Activated B cell treated with CpG ODN at 0.5 μM for 24 hours (primary cell): ENCODE measurements at regions of chr2 and their contacts with region 1.

Region 1: GRCh38 chr2:136135921-136136906 is 18.3 kb upstream of the CXCR4 start:
- DNase-seq: peak; percentile 52
- ATAC-seq: peak; percentile 48
- H3K4me3 Mint-ChIP-seq: peak overlapping the region; percentile 62
- H3K27ac Mint-ChIP-seq: peak overlapping the region; percentile 99
- H3K4me1 Mint-ChIP-seq: peaks cover 99% of the 10 kb centered on the region
- H3K27me3 Mint-ChIP-seq: no peaks in the 10 kb centered on the region
- CTCF ChIP-seq: no peak

Region 2: GRCh38 chr2:135741395-135742324 is 394.6 kb before region 1 on chr2 and contains the start of gene UBXN4:
- CTCF ChIA-PET with region 1: no interaction called
- POLR2A ChIA-PET with region 1: no interaction called
- intact Hi-C with region 1: loop called (anchors 10 kb)
- DNase-seq: peak; percentile 81
- ATAC-seq: peak; percentile 87
- H3K4me3 Mint-ChIP-seq: peak within 1 kb of the TSS; percentile 99
- H3K27ac Mint-ChIP-seq: peak within 1 kb of the TSS; percentile 99
- H3K4me1 Mint-ChIP-seq: peaks cover 40% of the 10 kb centered on the region
- H3K27me3 Mint-ChIP-seq: no peaks in the 10 kb centered on the region
- CTCF ChIP-seq: no peak
- total RNA-seq, gene UBXN4: 87.8 and 107 TPM in 2 replicates

Region 3: GRCh38 chr2:136008205-136008865 is 127.9 kb before region 1 on chr2:
- CTCF ChIA-PET with region 1: no interaction called
- POLR2A ChIA-PET with region 1: interaction called, 5 read pairs
- intact Hi-C with region 1: loop called (anchors 1 kb)
- DNase-seq: peak; percentile 46
- ATAC-seq: peak; percentile 93
- H3K4me3 Mint-ChIP-seq: peak overlapping the region; percentile 52
- H3K27ac Mint-ChIP-seq: peak overlapping the region; percentile 90
- H3K4me1 Mint-ChIP-seq: peaks cover 66% of the 10 kb centered on the region
- H3K27me3 Mint-ChIP-seq: no peaks in the 10 kb centered on the region
- CTCF ChIP-seq: no peak

Region 4: GRCh38 chr2:136156411-136156810 is 20.2 kb after region 1 on chr2:
- CTCF ChIA-PET with region 1: no interaction called
- POLR2A ChIA-PET with region 1: interaction called, 6 read pairs
- intact Hi-C with region 1: loop called (anchors 2 kb)
- DNase-seq: no peak
- ATAC-seq: no peak
- H3K4me3 Mint-ChIP-seq: no peak overlapping the region
- H3K27ac Mint-ChIP-seq: no peak overlapping the region
- H3K4me1 Mint-ChIP-seq: peaks cover 15% of the 10 kb centered on the region
- H3K27me3 Mint-ChIP-seq: no peaks in the 10 kb centered on the region
- CTCF ChIP-seq: no peak

Region 5: DNA sequence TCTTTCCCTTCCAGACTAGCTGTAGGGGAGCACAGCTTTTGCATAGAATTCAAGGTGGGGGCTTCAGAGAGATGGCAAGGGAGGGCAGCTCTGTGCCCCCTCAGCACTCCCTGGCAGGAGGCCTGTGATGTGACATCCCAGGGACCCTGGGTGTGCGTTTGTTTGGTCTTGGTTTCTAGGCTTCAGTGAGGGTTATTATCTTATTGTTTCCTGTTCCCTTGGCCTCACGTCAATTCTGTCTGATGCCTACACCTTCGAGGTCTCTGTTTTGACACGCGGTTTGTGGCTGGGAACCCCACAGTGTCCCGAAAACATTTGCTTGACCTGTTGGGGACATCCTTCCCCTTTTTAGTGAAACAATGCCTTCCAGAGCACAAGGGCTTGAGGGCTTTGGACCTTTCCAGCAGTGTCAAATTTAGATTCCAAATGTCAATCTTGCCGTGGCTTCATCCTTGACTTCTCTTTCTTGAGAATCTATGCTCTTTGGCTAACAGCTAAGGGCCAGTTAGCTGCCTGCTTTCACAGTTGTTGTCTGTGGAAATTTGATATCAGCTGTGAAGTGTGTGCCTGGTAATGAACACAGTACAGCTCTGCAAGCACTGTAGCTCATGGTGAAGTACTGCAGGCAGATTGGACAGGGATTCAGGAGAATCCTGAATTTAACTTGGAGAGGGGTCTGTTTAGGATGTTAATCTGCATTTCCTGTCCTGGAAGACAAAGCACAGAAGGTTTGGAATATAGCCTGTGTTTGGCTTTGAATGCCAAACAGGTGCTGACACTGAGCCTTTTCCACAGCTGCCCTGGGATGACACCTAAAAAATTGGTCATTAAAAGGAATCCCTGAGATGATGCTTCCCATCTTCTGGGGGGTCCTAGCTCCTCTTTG is 90.0 kb after region 1 on chr2:
- CTCF ChIA-PET with region 1: no interaction called
- POLR2A ChIA-PET with region 1: interaction called, 25 read pairs
- intact Hi-C with region 1: no loop called
- DNase-seq: no peak
- ATAC-seq: peak; percentile 77
- H3K4me3 Mint-ChIP-seq: peak overlapping the region; percentile 2
- H3K27ac Mint-ChIP-seq: peak overlapping the region; percentile 87
- H3K4me1 Mint-ChIP-seq: peaks cover 67% of the 10 kb centered on the region
- H3K27me3 Mint-ChIP-seq: no peaks in the 10 kb centered on the region
- CTCF ChIP-seq: no peak

Region 6: GRCh38 chr2:136310005-136310495 is 173.8 kb after region 1 on chr2:
- CTCF ChIA-PET with region 1: no interaction called
- POLR2A ChIA-PET with region 1: interaction called, 4 read pairs
- intact Hi-C with region 1: loop called (anchors 5 kb)
- DNase-seq: no peak
- ATAC-seq: peak; percentile 16
- H3K4me3 Mint-ChIP-seq: peak overlapping the region; percentile 1
- H3K27ac Mint-ChIP-seq: peak overlapping the region; percentile 4
- H3K4me1 Mint-ChIP-seq: peaks cover 30% of the 10 kb centered on the region
- H3K27me3 Mint-ChIP-seq: no peaks in the 10 kb centered on the region
- CTCF ChIP-seq: no peak

Region 7: DNA sequence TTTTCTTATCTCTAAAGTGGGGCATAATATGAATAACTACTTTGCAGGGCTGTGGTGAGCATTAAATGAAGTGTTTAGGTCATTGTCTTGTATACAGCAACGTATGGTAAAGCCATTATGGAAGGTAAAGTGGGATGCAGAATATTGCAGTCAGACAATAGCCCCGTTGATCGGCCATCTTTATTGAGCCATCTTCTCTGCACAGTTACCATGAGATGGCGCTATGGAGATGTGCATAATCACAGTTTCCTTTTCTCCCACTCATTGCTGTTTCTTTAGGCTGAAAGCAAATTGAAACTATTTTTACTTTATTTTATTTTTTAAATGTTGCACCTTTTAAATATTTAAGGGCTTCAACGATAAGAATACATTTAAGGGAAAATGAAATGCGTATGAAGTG is 738.0 kb after region 1 on chr2:
- CTCF ChIA-PET with region 1: no interaction called
- POLR2A ChIA-PET with region 1: no interaction called
- intact Hi-C with region 1: no loop called
- DNase-seq: no peak
- ATAC-seq: no peak
- H3K4me3 Mint-ChIP-seq: no peak overlapping the region
- H3K27ac Mint-ChIP-seq: no peak overlapping the region
- H3K4me1 Mint-ChIP-seq: no peaks in the 10 kb centered on the region
- H3K27me3 Mint-ChIP-seq: no peaks in the 10 kb centered on the region
- CTCF ChIP-seq: no peak